ENCODE measurements at regions of chr5 and their contacts with region 1.

Region 1: DNA sequence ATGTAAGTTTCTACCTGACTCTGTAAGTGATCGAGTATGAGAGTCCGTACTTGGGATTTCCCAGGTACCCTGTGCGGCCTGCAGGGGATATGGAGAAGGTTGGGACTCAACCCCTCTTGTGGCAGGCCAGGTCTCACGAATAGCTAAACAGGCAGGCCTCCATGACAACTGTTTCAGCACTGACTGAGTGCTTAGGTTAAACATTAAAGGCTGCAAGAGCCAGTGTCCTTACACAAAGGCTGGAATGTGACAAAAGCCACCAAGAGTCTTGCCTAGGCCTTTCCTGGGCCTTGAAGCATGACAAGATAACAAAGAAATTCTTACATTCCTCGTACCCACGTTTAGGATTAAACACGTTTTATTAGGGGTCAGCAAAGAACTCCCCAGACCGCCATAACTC is 58.6 kb downstream of the THBS4 start:
- DNase-seq: no peak
- H3K4me3 ChIP-seq: no peak overlapping the region
- H3K27ac ChIP-seq: no peak overlapping the region
- H3K4me1 ChIP-seq: no peaks in the 10 kb centered on the region
- H3K27me3 ChIP-seq: no peaks in the 10 kb centered on the region
- CTCF ChIP-seq: no peak
- POLR2A ChIP-seq: no peak

Region 2: DNA sequence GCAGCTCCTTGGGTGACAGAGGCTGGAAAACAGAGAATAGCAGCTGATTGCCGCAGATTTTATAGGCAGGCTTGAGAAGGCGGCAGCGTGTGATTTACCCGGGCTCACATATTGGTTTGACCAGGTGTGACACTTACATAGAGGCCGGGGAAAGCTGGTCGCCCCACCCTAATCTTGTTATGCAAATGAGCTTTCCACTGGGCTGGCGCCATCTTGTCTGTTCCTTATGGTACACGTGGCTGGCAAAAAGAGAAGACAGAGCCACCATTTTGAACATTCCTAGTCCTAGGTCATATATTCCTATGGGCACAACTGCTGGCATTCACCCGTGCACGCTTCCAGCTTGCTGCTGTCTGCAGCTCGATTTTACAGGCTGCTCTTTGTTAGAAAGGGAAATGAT is 214.7 kb after region 1 on chr5:
- intact Hi-C with region 1: loop called (anchors 10 kb)
- DNase-seq: no peak
- H3K4me3 ChIP-seq: no peak overlapping the region
- H3K27ac ChIP-seq: no peak overlapping the region
- H3K4me1 ChIP-seq: no peaks in the 10 kb centered on the region
- H3K27me3 ChIP-seq: no peaks in the 10 kb centered on the region
- CTCF ChIP-seq: no peak
- POLR2A ChIP-seq: no peak

Region 3: DNA sequence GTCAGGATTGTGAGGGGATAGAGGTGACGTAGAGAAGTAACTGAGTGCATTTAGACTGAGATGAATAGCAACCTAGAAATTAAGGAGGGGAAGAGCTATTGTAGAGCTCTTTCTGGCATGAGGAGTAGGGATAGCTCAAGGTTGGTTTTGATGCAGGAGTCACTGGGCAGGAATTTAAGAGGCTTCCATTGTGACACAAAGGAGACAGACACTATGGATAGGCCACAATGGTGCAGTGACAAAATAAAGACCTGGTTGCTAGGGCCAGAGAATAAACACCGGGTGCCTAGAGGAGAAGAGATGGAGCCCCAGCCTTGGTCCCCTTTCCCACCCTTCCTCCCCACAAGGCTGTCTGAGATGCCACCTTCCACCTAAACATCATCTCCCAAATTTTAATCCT is 225.9 kb after region 1 on chr5 and contains the start of gene SPZ1:
- intact Hi-C with region 1: no loop called
- DNase-seq: no peak
- H3K4me3 ChIP-seq: no peak within 1 kb of the TSS
- H3K27ac ChIP-seq: no peak within 1 kb of the TSS
- H3K4me1 ChIP-seq: no peaks in the 10 kb centered on the region
- H3K27me3 ChIP-seq: no peaks in the 10 kb centered on the region
- CTCF ChIP-seq: no peak
- POLR2A ChIP-seq: no peak
- total RNA-seq, gene SPZ1: not detected

Measured in breast epithelium (tissue), 4 donors.